ENCODE measurements at regions of chr15 and their contacts with region 1.

Region 1: GRCh38 chr15:68304589-68305337 is 27.2 kb downstream of the FEM1B start:
- DNase-seq: peak; percentile 15
- H3K4me3 ChIP-seq: no peak overlapping the region
- H3K27ac ChIP-seq: no peak overlapping the region
- H3K4me1 ChIP-seq: peaks cover 2% of the 10 kb centered on the region
- H3K27me3 ChIP-seq: no peaks in the 10 kb centered on the region
- CTCF ChIP-seq: no peak

Region 2: DNA sequence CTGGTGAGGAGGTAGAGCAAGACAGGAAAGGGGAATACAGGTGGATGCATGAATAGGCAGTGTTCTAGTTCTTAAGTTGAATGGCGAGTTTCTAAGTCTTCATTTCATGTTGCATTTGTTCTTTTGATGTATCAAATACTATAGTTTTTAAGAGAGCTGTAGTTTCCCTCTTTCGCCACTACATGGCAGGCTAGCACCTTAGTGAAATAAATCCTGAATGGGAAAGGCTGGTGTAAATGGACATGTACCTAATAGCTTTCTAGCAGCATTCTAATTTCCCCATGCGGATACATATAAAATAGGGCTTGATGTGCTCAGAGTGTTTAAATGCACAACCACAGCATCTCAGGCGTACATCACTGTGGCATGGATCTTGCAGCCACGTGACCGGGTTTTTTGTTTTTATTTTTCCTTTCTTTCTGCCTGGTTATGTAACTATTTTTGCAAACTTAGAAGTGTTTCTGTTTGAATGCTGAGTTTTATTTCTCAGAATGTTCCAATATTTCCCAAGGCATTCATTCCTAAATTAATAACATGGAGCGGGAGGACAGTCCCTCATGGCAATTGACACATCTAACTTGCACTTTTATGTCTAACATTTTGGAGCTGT is 51.7 kb before region 1 on chr15:
- intact Hi-C with region 1: loop called (anchors 5 kb)
- DNase-seq: peak; percentile 56
- H3K4me3 ChIP-seq: no peak overlapping the region
- H3K27ac ChIP-seq: no peak overlapping the region
- H3K4me1 ChIP-seq: no peaks in the 10 kb centered on the region
- H3K27me3 ChIP-seq: no peaks in the 10 kb centered on the region
- CTCF ChIP-seq: peak; percentile 84

Measured in colonic mucosa (tissue), 4 donors.